CD4-positive, alpha-beta memory T cell (primary cell): ENCODE measurements at regions of chr4 and their contacts with region 1.

Region 1: DNA sequence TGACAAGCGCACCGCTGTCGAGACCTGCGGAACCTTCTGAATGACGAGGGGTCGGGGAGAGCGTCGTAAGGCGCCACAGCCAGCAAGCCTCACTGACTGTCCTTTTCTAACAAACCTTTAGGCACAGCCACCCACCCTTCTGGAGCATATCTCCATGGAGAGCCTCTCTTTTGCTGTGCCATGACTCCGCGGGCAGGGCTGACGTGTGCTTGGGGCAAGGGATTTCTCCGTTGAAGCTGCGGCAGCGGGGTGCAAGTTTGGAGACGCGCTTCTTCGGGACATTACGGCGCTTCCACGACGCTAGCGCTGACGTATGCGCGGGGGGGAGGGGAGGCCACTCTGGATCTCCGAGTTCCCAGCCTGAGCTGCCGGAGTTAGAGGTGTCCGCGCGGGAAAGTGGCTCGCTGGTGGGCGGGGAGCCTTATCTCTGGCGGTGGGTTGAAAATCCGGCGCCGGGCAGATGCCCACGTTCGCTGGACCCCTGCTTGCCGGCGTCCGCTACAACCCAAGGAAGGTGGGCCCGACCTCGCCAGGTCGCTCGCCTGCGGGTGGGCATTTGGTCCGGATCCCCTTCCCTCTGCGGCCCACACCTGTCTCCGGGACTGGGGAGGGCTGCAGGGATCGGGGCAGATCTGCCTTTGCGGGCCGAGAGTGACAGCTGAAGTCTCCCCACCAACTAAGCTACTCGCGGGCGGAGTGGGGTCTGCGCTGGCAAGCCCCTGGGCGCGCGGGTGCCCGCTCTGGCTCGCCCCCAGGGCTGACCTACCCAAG is 543 bp upstream of the SLC10A7 start:
- DNase-seq: peak; percentile 77 to 83 (median 79)
- H3K4me3 ChIP-seq: peak overlapping the region; percentile 85 to 100
- H3K4me3 Mint-ChIP-seq: no peak overlapping the region
- H3K27ac ChIP-seq: peak overlapping the region; percentile 71
- H3K27ac Mint-ChIP-seq: peak overlapping the region in 2 of 7 donors; percentile 68 to 90
- H3K4me1 ChIP-seq: peaks cover 36% of the 10 kb centered on the region
- H3K4me1 Mint-ChIP-seq: peaks cover 17 to 33% (median 26%) of the 10 kb centered on the region in 4 donors
- H3K27me3 ChIP-seq: no peaks in the 10 kb centered on the region
- H3K27me3 Mint-ChIP-seq: no peaks in the 10 kb centered on the region

Region 2: DNA sequence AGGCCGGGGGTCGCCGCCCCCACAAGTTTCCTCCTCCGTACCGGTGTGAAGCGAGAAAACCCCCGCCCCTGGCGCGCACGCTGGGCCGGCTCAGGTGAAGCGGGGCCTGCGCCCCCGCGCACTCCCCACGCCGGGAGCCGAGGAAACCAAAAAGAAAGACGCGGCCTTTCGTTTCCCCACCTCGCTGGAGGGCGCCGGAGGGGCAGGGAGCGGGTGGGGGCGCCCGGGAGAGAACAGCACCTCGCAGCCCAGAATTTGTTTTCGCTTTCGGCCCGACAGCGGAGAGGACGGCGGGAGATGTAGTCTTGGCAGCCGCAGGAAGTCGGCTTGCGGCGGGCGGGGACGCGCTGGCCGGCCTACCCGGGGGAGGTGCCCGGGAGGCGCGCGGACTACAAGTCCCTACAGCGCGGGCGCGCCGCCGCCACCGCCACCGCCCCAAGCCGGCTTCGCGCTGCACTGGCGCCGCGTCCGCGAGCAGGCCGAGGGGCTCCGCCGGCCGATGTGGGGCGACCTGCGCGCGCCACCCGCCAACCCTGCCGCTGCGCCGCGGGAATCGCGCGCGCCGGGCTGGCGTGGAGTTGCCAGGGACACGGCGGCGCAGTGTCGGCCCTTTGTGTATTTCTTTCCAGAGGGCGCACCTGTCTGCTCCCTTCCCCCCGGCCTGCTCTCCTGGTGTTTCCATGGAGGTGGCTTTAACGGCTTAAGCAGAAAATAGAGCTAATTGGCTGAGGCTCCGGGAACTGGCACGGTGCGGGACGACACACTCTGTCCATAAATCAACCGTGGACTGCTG is 1341.8 kb before region 1 on chr4 and contains the start of gene OTUD4:
- CTCF ChIA-PET with region 1: no interaction called
- POLR2A ChIA-PET with region 1: no interaction called
- intact Hi-C with region 1: loop called (anchors 5 kb)
- DNase-seq: peak; percentile 95 to 97 (median 96)
- H3K4me3 ChIP-seq: peak within 1 kb of the TSS; percentile 84 to 96
- H3K4me3 Mint-ChIP-seq: peak within 1 kb of the TSS; percentile 89 to 98 (median 95)
- H3K27ac ChIP-seq: peak within 1 kb of the TSS; percentile 94
- H3K27ac Mint-ChIP-seq: peak within 1 kb of the TSS; percentile 96 to 99 (median 98)
- H3K4me1 ChIP-seq: peaks cover 40% of the 10 kb centered on the region
- H3K4me1 Mint-ChIP-seq: peaks cover 15 to 40% (median 28%) of the 10 kb centered on the region in 4 donors
- H3K27me3 ChIP-seq: no peaks in the 10 kb centered on the region
- H3K27me3 Mint-ChIP-seq: no peaks in the 10 kb centered on the region
- total RNA-seq, gene OTUD4: 60.1 to 61.3 TPM

Region 3: DNA sequence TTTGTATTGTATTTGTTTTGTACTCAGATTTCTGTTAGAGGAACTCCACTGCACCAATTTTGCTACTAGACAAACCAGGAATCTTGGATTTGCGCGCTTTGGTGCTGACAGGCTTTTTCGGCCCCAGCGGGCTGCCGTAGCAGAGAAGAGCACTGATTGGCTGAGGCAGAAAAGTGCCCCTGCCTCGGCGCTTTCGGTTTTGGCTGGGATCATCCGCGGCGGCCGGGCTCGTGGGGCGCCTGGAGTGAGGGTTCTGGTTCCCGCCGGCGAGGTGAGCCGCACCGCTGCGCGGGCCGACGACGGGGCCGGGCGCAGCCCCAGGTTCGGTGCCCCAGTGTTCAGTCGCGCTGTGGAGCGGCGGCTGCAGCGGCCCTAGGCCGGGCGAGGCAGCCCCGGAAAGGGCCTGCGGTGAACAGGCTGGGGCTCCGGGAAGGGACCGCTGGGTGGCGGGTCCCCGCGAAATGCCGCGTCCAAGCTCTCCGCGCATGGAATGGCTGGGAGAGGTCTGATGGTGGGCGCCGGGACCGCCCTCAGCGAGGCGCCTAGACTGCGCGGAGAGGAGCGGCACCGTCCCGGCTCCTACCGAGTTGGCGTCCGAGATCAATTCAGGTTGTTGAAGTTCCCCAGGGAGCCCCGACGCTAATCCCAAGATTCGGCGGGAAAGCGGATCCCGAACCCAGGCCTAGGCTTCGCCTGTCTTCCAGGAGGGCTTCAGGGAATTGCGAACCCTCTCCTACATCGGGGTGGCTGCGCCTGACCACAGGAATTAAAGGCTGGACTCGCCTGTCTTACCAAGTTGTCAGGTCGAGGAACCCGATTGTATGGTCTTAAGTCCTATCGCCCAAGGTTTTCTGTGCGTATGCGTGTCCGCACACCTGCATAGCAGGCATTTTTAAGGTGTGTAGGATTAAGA is 346.5 kb before region 1 on chr4 and contains the start of gene LSM6:
- CTCF ChIA-PET with region 1: no interaction called
- POLR2A ChIA-PET with region 1: no interaction called
- intact Hi-C with region 1: loop called (anchors 5 kb)
- DNase-seq: peak; percentile 83 to 87 (median 84)
- H3K4me3 ChIP-seq: peak within 1 kb of the TSS; percentile 39 to 96
- H3K4me3 Mint-ChIP-seq: peak within 1 kb of the TSS; percentile 86 to 96 (median 92)
- H3K27ac ChIP-seq: peak within 1 kb of the TSS; percentile 81
- H3K27ac Mint-ChIP-seq: peak within 1 kb of the TSS; percentile 93 to 98 (median 97)
- H3K4me1 ChIP-seq: peaks cover 53% of the 10 kb centered on the region
- H3K4me1 Mint-ChIP-seq: peaks cover 34 to 63% (median 42%) of the 10 kb centered on the region in 4 donors
- H3K27me3 ChIP-seq: no peaks in the 10 kb centered on the region
- H3K27me3 Mint-ChIP-seq: no peaks in the 10 kb centered on the region
- total RNA-seq, gene LSM6: 47.7 to 54.0 TPM

Region 4: GRCh38 chr4:146342600-146343192 is 179.6 kb before region 1 on chr4:
- CTCF ChIA-PET with region 1: no interaction called
- POLR2A ChIA-PET with region 1: no interaction called
- intact Hi-C with region 1: loop called (anchors 5 kb)
- DNase-seq: peak in 4 of 5 donors; percentile 13 to 41 (median 34)
- H3K4me3 ChIP-seq: no peak overlapping the region
- H3K4me3 Mint-ChIP-seq: no peak overlapping the region
- H3K27ac ChIP-seq: no peak overlapping the region
- H3K27ac Mint-ChIP-seq: peak overlapping the region in 1 of 7 donors; percentile 53
- H3K4me1 ChIP-seq: no peaks in the 10 kb centered on the region
- H3K4me1 Mint-ChIP-seq: peaks cover 0 to 4% (median 1%) of the 10 kb centered on the region in 4 donors
- H3K27me3 ChIP-seq: no peaks in the 10 kb centered on the region
- H3K27me3 Mint-ChIP-seq: no peaks in the 10 kb centered on the region

Region 5: GRCh38 chr4:146458594-146458993 is 63.7 kb before region 1 on chr4:
- CTCF ChIA-PET with region 1: no interaction called
- POLR2A ChIA-PET with region 1: no interaction called
- intact Hi-C with region 1: loop called (anchors 1 kb)
- DNase-seq: peak in 4 of 5 donors; percentile 39 to 55 (median 44)
- H3K4me3 ChIP-seq: no peak overlapping the region
- H3K4me3 Mint-ChIP-seq: peak overlapping the region in 7 of 8 donors; percentile 36 to 77 (median 64)
- H3K27ac ChIP-seq: peak overlapping the region; percentile 33
- H3K27ac Mint-ChIP-seq: peak overlapping the region; percentile 84 to 96 (median 89)
- H3K4me1 ChIP-seq: peaks cover 11% of the 10 kb centered on the region
- H3K4me1 Mint-ChIP-seq: peaks cover 11 to 29% (median 18%) of the 10 kb centered on the region in 4 donors
- H3K27me3 ChIP-seq: no peaks in the 10 kb centered on the region
- H3K27me3 Mint-ChIP-seq: no peaks in the 10 kb centered on the region

Region 6: GRCh38 chr4:146945556-146946374 is 423.5 kb after region 1 on chr4 and contains the start of gene TTC29:
- CTCF ChIA-PET with region 1: no interaction called
- POLR2A ChIA-PET with region 1: no interaction called
- intact Hi-C with region 1: loop called (anchors 10 kb)
- DNase-seq: peak; percentile 78 to 86 (median 81)
- H3K4me3 ChIP-seq: peak within 1 kb of the TSS; percentile 4 to 54
- H3K4me3 Mint-ChIP-seq: peak within 1 kb of the TSS; percentile 78 to 90 (median 89)
- H3K27ac ChIP-seq: no peak within 1 kb of the TSS
- H3K27ac Mint-ChIP-seq: peak within 1 kb of the TSS in 6 of 7 donors; percentile 16 to 73 (median 36)
- H3K4me1 ChIP-seq: peaks cover 18% of the 10 kb centered on the region
- H3K4me1 Mint-ChIP-seq: peaks cover 19 to 36% (median 28%) of the 10 kb centered on the region in 4 donors
- H3K27me3 ChIP-seq: no peaks in the 10 kb centered on the region
- H3K27me3 Mint-ChIP-seq: peaks cover 0 to 4% of the 10 kb centered on the region in 2 donors
- total RNA-seq, gene TTC29: not detected

Region 7: DNA sequence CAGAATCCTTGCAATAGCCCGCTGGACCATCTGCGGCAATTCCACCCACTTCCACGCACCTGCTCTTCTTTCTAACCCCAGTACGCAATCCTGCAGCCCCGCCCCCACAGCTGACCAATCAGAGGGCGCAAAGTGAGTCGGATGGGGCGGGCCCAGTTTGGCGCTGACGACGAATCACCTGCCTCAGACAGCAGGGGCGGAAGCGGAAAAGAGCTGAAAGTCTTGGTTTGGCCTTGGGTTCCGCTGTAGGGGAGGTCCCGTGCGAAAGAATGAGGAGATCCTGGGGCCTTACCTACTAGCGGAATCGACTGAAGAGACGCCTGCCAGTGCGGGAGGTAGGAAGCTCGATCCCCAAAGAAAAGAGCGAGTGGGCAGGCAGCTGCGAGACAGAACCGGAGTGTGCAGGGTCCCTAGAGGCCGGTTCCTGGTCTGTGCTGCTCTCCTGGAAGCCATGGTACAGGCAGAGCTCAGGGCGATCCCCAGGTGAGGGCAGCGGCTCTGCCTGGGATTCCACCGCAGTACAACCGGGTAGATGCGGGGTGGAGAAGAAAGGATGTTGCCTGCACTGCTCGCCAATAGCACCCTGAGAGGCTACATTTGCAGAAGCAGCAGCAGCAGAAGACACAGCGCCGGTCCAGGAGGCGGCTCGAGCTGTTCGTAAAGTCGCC is 1095.0 kb after region 1 on chr4 and contains the start of gene TMEM184C:
- CTCF ChIA-PET with region 1: no interaction called
- POLR2A ChIA-PET with region 1: no interaction called
- intact Hi-C with region 1: loop called (anchors 5 kb)
- DNase-seq: peak; percentile 97 to 98 (median 98)
- H3K4me3 ChIP-seq: peak within 1 kb of the TSS; percentile 82 to 99
- H3K4me3 Mint-ChIP-seq: peak within 1 kb of the TSS; percentile 92 to 98 (median 96)
- H3K27ac ChIP-seq: peak within 1 kb of the TSS; percentile 93
- H3K27ac Mint-ChIP-seq: peak within 1 kb of the TSS; percentile 96 to 99 (median 97)
- H3K4me1 ChIP-seq: peaks cover 49% of the 10 kb centered on the region
- H3K4me1 Mint-ChIP-seq: peaks cover 22 to 51% (median 36%) of the 10 kb centered on the region in 4 donors
- H3K27me3 ChIP-seq: no peaks in the 10 kb centered on the region
- H3K27me3 Mint-ChIP-seq: peaks cover 0 to 1% of the 10 kb centered on the region in 2 donors
- total RNA-seq, gene TMEM184C: 28.8 to 31.5 TPM